Sigmoid colon (tissue), 7 donors: ENCODE measurements at regions of chr19 and their contacts with region 1.

Region 1: DNA sequence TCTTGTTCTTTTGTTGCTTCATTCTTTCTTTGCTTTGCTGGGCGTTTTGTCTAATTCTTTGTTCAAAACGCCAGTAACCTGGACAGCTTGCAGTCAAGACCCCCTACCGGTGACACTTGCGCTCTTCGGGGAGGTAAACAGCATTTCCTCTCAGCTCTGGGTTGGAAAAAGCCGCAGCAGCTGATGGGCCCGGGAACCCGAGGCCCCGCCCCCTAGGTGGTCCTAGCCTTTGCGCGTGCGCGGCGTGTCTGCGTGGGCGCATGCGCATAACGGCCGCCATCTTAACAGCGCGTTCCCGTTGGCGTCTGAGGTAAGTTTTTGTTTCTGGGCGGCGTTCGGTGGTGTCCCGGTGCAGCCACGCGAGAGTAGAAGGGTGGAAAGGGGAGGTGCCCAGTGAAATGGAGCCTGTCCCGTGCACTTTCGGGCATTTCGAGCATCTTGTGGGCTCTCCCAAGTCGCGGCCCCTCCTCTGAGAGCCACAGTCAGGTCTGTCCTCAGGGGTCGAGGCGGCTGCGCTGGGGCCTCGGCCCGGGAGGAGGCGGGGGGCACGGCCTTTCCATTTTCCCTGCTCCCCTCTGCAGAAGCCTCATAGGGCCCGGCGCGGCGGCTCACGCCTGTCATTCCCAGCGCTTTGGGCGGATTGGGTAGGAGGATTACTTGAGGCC is at the start of gene ZNF559:
- DNase-seq: peak; percentile 97
- H3K4me3 ChIP-seq: peak within 1 kb of the TSS; percentile 70 to 83 (median 76)
- H3K27ac ChIP-seq: peak within 1 kb of the TSS; percentile 88 to 94 (median 92)
- H3K4me1 ChIP-seq: peaks cover 0 to 7% (median 7%) of the 10 kb centered on the region in 4 donors
- H3K27me3 ChIP-seq: no peaks in the 10 kb centered on the region
- CTCF ChIP-seq: no peak
- EP300 ChIP-seq: no peak
- POLR2A ChIP-seq: peak in 1 of 2 donors; percentile 27
- total RNA-seq, gene ZNF559: 16.5 to 45.7 (median 23.9) TPM

Region 2: GRCh38 chr19:9309139-9309973 is 14.7 kb before region 1 on chr19 and contains the start of gene ZNF699:
- intact Hi-C with region 1: loop called (anchors 1 kb)
- DNase-seq: peak; percentile 99
- H3K4me3 ChIP-seq: peak within 1 kb of the TSS; percentile 68 to 94 (median 84)
- H3K27ac ChIP-seq: peak within 1 kb of the TSS; percentile 91 to 98 (median 96)
- H3K4me1 ChIP-seq: peaks cover 0 to 21% (median 13%) of the 10 kb centered on the region in 4 donors
- H3K27me3 ChIP-seq: no peaks in the 10 kb centered on the region
- CTCF ChIP-seq: no peak
- EP300 ChIP-seq: peak in 1 of 4 donors; percentile 4
- POLR2A ChIP-seq: peak; percentile 33 to 63
- total RNA-seq, gene ZNF699: 3.1 to 23.7 (median 11.9) TPM

Region 3: DNA sequence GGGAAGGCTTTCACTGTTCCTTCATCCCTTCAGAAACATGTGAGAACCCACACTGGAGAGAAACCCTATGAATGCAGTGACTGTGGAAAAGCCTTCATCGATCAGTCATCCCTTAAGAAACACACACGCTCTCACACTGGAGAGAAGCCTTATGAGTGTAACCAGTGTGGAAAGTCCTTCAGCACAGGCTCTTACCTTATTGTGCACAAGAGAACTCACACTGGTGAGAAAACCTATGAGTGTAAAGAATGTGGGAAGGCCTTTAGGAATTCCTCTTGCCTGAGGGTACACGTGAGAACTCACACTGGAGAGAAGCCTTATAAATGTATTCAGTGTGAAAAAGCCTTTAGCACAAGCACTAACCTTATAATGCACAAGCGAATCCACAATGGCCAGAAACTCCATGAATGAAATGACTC is 57.3 kb after region 1 on chr19:
- intact Hi-C with region 1: no loop called
- DNase-seq: no peak
- H3K4me3 ChIP-seq: no peak overlapping the region
- H3K27ac ChIP-seq: no peak overlapping the region
- H3K4me1 ChIP-seq: no peaks in the 10 kb centered on the region
- H3K27me3 ChIP-seq: no peaks in the 10 kb centered on the region
- CTCF ChIP-seq: no peak
- EP300 ChIP-seq: no peak
- POLR2A ChIP-seq: no peak

Region 4: DNA sequence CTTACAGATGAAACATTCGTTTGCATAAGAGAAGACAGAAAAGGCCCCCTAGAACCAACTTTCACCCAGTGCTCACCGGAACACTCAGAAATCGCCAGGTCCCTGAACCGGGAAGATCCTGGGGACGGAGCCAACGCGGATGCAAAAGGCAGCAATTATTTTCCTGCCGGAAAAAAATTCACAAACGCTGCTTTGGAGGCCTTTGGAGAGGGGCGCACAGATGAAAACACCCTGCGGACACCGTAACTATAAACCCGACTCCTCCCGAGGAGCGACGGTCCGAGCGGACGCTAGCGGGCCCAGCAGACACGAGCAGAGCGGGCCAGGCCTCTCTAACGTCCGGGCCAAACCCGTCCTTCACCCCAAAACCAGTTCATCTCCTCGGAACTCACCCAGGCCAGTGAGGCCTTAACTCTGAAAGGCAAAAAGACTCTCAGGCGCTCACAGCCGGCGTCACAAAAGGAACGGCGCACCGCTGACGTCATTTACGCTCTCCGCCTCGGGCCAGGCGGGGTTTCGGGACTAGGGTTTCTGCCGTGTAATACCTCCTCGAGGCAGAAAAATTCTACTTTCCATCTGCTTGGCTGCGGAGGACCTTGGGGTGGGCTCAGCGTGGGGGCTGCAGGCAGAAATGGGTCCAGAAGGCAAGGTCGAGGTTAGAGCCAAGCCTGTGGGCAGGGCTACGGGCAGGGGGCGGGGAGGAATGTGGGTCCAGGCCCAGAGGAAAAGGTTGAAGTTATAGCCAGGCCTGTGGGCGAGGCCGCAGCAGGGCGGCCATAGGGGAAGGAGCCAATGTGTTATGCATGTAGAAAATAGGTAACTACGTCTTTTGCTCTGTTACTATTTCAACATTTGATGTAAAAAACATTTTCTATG is 214.4 kb after region 1 on chr19 and contains the start of gene ZNF426:
- intact Hi-C with region 1: loop called (anchors 5 kb)
- DNase-seq: peak; percentile 93
- H3K4me3 ChIP-seq: peak within 1 kb of the TSS; percentile 54 to 76 (median 72)
- H3K27ac ChIP-seq: peak within 1 kb of the TSS; percentile 91 to 95 (median 92)
- H3K4me1 ChIP-seq: peaks cover 0 to 18% (median 10%) of the 10 kb centered on the region in 4 donors
- H3K27me3 ChIP-seq: no peaks in the 10 kb centered on the region
- CTCF ChIP-seq: no peak
- EP300 ChIP-seq: no peak
- POLR2A ChIP-seq: peak in 1 of 2 donors; percentile 5
- total RNA-seq, gene ZNF426: 11.4 to 18.1 (median 12.7) TPM